Mammary epithelial cell (primary cell): ENCODE measurements at regions of chr1 and their contacts with region 1.

Region 1: GRCh38 chr1:10635085-10635896 is 160.5 kb downstream of the PEX14 start:
- DNase-seq: peak; percentile 94
- H3K4me3 ChIP-seq: peak overlapping the region; percentile 4 to 39 (median 22)
- H3K27ac ChIP-seq: peak overlapping the region; percentile 94
- H3K4me1 ChIP-seq: peaks cover 43% of the 10 kb centered on the region
- H3K27me3 ChIP-seq: no peaks in the 10 kb centered on the region
- CTCF ChIP-seq: no peak

Region 2: DNA sequence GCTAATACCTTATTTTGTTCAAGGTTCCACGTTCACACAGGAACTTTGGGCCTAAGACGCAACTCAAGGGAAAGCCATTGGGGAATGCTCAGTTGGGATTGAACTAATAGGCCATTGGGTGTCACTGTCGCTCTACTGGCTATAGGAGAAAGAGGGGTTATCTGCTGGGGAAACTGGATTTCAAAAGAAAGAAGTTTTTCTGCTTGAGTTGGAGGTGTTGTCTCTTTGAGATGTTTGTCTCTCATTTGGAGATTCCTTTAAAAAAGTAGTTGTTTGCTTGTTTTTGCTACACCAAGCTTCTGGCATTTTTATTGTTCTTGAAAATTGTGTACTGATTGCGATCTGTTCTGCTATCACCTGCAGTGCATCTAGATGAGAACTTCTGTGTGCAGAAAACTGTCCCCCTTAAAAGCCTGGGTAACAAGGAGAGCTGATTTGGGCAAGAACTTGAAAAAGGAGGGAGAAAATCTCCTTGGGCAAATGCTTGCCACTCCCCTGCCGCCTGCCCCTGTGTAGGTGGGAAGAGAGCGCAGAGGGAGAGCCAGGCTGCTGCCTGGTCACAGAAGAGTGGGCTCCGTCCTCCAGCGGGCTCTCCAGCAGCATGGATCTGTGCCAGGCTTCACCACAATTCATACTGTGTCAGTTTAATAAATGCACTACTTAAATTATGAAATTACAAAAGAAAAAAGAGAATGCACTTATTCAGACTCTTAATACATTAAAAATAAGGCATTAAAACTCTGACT is 120.6 kb before region 1 on chr1:
- CTCF ChIA-PET with region 1: no interaction called
- dilution Hi-C with region 1: no loop called
- in situ Hi-C with region 1: no loop called
- intact Hi-C with region 1: loop called (anchors 2 kb)
- DNase-seq: peak; percentile 40
- H3K4me3 ChIP-seq: no peak overlapping the region
- H3K27ac ChIP-seq: no peak overlapping the region
- H3K4me1 ChIP-seq: peaks cover 55% of the 10 kb centered on the region
- H3K27me3 ChIP-seq: no peaks in the 10 kb centered on the region
- CTCF ChIP-seq: peak; percentile 63 to 64

Region 3: DNA sequence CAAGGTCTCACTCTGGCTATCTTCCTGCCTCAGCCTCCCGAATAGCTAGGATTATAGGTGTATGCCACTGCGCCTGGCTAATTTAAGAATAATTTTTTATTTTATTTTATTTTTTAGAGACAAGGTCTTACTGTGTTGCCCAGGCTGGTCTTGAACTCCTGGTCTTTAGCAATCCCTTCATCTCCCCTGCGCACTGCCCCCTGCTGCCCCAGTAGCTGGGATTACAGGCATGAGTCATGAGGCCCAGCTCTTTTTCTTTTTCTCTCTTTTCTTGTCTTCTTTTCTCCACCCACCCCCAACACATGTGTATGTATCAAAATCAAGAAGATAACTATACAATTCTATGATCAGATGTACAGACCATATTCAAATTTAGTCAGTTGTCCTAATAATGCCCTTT is 73.3 kb before region 1 on chr1:
- CTCF ChIA-PET with region 1: no interaction called
- dilution Hi-C with region 1: no loop called
- in situ Hi-C with region 1: no loop called
- intact Hi-C with region 1: loop called (anchors 2 kb)
- DNase-seq: peak; percentile 5
- H3K4me3 ChIP-seq: no peak overlapping the region
- H3K27ac ChIP-seq: peak overlapping the region; percentile 67
- H3K4me1 ChIP-seq: peaks cover 5% of the 10 kb centered on the region
- H3K27me3 ChIP-seq: no peaks in the 10 kb centered on the region
- CTCF ChIP-seq: peak; percentile 22 to 44

Region 4: GRCh38 chr1:10598389-10598702 is 36.9 kb before region 1 on chr1:
- CTCF ChIA-PET with region 1: no interaction called
- dilution Hi-C with region 1: no loop called
- in situ Hi-C with region 1: no loop called
- intact Hi-C with region 1: loop called (anchors 2 kb)
- DNase-seq: no peak
- H3K4me3 ChIP-seq: no peak overlapping the region
- H3K27ac ChIP-seq: peak overlapping the region; percentile 84
- H3K4me1 ChIP-seq: peaks cover 16% of the 10 kb centered on the region
- H3K27me3 ChIP-seq: no peaks in the 10 kb centered on the region
- CTCF ChIP-seq: no peak

Region 5: DNA sequence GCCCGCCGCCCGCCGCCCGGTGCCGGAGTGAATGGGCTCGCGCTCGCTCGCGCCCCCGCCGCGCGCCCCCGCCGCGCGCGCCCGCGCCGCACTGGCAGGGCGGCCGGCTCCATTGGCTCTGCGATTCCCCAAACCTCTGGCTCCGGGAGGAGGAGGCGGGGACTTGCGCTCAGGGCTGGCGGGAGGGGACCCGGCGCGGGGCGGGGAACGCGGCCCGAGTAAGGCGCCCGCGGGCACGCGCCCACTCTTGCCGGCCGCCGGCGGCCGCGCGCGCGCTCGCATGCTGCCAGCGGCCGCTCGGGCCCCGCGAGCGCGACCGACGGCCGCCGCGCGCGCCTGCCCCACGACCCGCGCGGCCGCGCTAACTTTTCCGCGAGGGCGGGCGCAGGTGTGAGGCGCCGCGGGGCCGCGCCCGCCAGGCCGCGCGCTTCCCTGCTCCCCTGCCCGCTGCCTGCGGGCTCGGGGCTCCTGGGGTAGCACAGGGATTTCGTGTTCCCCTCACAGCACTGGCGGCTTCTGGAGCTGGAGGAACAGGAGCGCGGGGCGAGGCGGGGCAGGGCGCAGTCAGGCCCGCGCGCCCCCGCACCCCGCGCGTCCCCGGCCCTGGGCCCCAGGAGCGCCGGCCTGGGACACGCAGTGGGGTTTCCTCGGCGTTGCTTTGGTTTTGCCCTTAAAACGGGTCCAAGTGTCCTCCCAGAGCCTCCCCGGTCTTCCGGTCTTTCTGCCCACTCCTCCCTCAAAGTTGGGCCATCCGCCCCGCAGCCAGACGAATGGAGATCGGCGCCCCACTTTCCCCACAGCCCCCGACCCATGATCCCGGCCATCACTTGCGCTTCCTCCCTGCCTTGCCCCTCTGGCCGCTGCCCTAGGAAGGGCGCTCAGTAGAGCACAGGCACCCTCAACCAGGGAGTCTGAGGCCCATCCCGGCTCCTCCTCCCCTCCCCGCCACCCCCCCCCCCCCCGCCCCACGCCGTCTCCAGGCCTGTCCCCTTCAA is 59.6 kb after region 1 on chr1:
- CTCF ChIA-PET with region 1: no interaction called
- dilution Hi-C with region 1: no loop called
- in situ Hi-C with region 1: no loop called
- intact Hi-C with region 1: loop called (anchors 2 kb)
- DNase-seq: peak; percentile 78
- H3K4me3 ChIP-seq: peak overlapping the region in 2 of 3 experiments; percentile 42 to 53
- H3K27ac ChIP-seq: no peak overlapping the region
- H3K4me1 ChIP-seq: peaks cover 16% of the 10 kb centered on the region
- H3K27me3 ChIP-seq: no peaks in the 10 kb centered on the region
- CTCF ChIP-seq: no peak

Region 6: DNA sequence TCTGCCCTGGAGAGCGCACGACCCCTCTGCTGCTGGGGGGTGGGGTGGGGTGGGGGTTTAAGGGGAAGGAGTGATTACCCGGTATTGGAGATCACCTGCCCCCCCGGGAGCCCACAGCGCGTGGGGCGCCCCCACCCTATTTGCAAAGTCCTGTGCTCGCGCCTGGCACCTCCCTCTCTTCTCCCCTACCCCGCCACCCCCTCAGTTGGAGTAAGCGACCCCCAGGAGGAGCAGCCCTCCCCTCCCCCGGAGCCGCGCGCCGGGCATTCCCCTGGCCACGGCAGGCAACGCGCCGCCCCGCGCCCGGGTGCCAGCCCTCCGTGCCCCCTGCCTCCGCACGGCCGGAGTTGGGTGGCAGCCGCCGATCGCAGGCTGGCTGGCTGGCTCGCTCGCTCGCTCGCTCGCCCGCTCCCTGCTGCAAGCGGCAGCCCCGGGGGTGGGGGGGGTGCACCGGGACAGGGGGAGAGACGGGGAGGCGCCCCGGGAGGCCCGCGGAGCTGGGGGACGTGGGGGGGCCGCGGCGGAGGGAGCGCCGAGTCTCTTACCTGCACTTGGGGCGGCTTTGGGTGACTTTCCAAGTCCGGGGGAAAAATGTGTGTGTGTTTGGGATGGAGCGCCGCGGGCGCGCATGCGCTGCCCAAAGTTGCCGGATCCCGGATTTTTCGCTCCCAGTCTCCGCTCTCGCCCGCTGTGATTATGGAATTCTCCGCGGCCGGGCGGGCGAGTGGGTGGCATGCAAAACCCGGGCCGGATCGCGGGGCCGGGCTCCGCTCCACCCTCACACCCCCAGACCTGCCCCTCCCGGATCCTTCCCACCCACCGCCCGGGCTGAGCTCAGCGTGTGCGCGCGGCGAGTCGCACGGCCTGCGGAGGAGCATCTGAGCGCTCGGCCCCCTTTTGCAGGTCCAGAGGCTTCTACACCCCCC is 161.0 kb after region 1 on chr1 and contains the start of gene CASZ1:
- CTCF ChIA-PET with region 1: no interaction called
- dilution Hi-C with region 1: no loop called
- in situ Hi-C with region 1: no loop called
- intact Hi-C with region 1: loop called (anchors 5 kb)
- DNase-seq: peak; percentile 92
- H3K4me3 ChIP-seq: peak within 1 kb of the TSS; percentile 64 to 87 (median 80)
- H3K27ac ChIP-seq: no peak within 1 kb of the TSS
- H3K4me1 ChIP-seq: peaks cover 10% of the 10 kb centered on the region
- H3K27me3 ChIP-seq: no peaks in the 10 kb centered on the region
- CTCF ChIP-seq: no peak
- total RNA-seq, gene CASZ1: 13.0 to 14.1 TPM

Region 7: DNA sequence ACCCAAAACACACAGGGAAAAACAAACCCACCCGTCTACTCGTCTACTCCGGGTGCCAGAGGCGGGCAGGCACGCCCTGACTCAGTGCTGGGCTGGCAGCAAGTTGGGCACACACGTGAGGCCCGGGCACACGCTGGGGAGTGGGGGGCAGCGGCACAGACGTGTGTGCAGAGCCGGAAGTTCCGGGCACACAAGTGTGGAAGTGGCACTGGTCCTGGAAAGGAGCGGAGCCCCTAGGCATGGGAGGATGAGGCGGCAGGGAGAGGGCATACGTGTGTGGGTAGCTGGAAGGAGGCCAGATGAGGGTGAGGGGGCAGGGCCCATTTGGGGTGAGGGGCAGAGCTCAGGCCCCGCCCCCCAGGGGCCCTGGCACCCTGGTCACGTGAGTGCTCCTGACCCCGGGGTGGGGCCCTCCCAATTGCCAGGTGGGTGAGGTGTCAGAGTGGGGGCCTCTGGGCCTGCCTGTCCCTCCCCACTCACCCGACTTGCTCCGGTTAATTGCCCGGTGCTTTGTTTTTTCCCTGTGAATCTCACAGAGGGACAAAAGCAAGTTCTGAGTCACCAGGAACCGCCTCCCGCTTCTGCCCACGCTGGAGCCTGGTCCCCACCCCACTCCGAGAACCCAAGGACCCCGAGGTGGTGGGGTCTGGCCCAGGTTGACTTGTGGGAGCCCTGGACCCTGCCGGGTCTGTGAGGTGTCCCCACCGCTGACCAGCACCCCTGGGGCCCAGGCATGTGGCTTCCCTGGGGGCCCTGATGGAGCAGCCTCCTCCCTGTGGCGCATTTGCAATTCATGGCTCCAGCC is 266.0 kb after region 1 on chr1:
- CTCF ChIA-PET with region 1: no interaction called
- dilution Hi-C with region 1: no loop called
- in situ Hi-C with region 1: no loop called
- intact Hi-C with region 1: loop called (anchors 1 kb)
- DNase-seq: peak; percentile 64
- H3K4me3 ChIP-seq: peak overlapping the region in 2 of 3 experiments; percentile 30 to 35
- H3K27ac ChIP-seq: peak overlapping the region; percentile 82
- H3K4me1 ChIP-seq: peaks cover 46% of the 10 kb centered on the region
- H3K27me3 ChIP-seq: no peaks in the 10 kb centered on the region
- CTCF ChIP-seq: no peak